Ascending aorta (tissue), 2 donors: ENCODE measurements at regions of chr10 and their contacts with region 1.

Region 1: GRCh38 chr10:123858077-123858681 is 33.4 kb downstream of the CPXM2 start:
- DNase-seq: peak in 1 of 2 donors; percentile 79
- H3K4me3 ChIP-seq: no peak overlapping the region
- H3K27ac ChIP-seq: peak overlapping the region; percentile 28 to 65
- H3K4me1 ChIP-seq: peaks cover 7 to 49% of the 10 kb centered on the region in 2 donors
- H3K27me3 ChIP-seq: no peaks in the 10 kb centered on the region
- CTCF ChIP-seq: no peak

Region 2: DNA sequence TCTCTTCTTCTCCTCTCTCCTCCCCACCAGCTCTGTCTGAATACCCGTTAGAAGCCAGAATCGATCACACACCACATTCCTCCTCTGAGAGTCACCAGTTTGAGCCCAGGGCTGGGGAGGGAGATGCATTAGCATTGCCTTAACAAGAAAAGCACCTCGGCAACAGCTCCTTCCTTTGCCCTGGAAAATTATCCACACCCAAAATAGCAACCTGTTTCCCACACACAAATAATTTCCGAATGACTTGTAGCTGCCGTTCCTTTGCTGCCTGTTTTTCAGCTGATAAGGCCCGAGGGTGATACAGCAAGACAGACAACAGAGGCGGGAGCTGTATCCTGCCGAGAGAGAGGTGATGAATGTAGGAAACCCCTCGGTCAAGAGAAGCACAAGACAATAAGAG is 57.9 kb before region 1 on chr10:
- intact Hi-C with region 1: loop called (anchors 5 kb)
- DNase-seq: peak in 1 of 2 donors; percentile 76
- H3K4me3 ChIP-seq: peak overlapping the region in 1 of 2 donors; percentile 16
- H3K27ac ChIP-seq: peak overlapping the region; percentile 79 to 89
- H3K4me1 ChIP-seq: peaks cover 0 to 21% of the 10 kb centered on the region in 2 donors
- H3K27me3 ChIP-seq: no peaks in the 10 kb centered on the region
- CTCF ChIP-seq: no peak

Region 3: DNA sequence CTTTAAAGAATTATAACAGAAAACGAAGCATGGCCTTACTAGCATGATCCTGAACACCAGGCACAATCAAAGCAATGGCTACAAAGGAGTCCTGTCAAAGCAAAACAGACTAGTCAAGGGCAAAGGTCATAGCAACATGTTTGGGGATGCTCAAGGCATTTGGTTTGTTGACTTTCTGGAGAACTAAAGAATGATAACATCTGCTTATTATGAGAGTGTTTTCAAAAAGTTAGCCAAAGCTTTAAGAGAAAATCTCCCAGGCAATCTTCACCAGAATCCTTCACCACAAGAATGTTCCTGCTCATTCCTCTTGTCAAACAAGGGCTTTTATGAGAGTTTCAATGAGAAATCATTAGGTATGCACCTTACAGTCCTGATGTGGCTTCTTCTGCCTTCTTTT is 128.6 kb after region 1 on chr10:
- intact Hi-C with region 1: no loop called
- DNase-seq: no peak
- H3K4me3 ChIP-seq: no peak overlapping the region
- H3K27ac ChIP-seq: no peak overlapping the region
- H3K4me1 ChIP-seq: no peaks in the 10 kb centered on the region
- H3K27me3 ChIP-seq: peaks cover 8% of the 10 kb centered on the region
- CTCF ChIP-seq: no peak